AG04450 (cell line): ENCODE measurements at regions of chr14 and their contacts with region 1.

Region 1: DNA sequence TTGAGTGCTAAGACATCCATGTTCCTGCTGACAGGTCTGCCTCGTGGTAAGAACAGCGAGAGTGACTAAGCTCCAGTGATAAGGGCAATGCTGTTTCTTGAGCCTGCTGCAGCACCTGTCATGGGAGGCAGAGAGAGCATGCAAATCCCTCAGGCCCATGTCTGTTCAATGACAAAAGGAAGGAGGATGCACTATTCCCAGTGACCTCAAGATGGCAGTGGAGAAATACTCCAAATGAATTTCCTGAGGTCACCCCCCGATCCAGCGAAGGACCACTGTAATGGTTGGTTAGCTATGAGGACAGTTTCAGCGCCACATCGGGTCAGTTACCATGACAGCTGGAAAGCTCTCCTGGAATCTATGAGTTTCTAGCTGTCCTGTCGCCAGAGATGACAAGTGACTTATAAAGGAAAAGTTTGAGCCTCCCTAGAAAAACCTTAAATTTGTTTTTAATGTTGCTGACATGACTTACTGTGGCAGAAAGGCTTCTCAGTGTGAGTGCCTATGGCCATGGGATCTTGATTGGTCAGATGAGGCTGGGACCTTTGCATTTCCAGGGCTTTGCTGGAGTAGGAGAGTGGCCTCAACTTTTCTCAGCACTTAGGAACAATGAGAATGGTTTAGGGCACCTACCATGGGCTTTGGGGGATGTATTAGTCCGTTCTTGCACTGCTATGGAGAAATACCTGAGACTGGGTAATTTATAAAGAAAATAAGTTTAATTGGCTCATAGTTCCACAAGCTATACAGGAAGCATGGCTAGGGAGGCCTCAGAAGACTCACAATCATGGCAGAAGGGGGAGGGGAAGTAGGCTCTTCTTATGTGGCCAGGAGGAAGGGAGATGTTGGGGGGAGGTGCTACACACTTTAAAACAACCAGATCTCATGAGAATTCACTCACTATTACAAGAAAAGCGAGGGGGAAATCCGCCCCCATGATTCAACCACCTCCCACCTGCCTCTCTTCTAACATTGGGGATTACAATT is 88.0 kb upstream of the TMEM260 start:
- DNase-seq: peak; percentile 16
- H3K4me3 ChIP-seq: no peak overlapping the region; the same call in 1 of the 2 replicates
- H3K27ac ChIP-seq: no peak overlapping the region
- H3K27me3 ChIP-seq: no peaks in the 10 kb centered on the region
- CTCF ChIP-seq: peak; percentile 86

Region 2: GRCh38 chr14:55430024-55430690 is 1061.4 kb before region 1 on chr14:
- CTCF ChIA-PET with region 1: interaction called, 11 read pairs
- POLR2A ChIA-PET with region 1: no interaction called
- DNase-seq: peak; percentile 67
- H3K4me3 ChIP-seq: no peak overlapping the region
- H3K27ac ChIP-seq: no peak overlapping the region
- H3K27me3 ChIP-seq: peaks cover 3% of the 10 kb centered on the region
- CTCF ChIP-seq: peak; percentile 64

Region 3: DNA sequence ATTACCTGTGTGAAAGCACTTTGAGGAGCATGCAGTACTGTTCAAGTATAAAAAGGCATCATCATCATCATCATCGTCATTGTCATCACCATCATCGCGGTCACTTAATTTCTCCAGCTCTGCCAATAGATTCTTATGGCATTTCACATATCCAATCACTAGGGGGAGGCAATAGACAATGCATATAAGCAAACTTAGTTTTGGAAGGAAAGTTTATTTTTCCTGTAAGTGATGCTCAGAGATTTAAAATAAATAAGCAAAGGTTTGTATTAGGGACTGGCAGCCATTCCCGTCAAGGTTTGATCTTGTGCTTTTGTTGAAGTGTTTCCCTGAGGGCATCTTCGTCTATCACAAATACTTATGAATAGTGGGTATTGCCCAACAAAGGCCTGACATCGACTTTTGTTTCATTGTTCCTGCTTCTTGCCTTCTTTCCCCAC is 784.2 kb before region 1 on chr14:
- CTCF ChIA-PET with region 1: interaction called, 18 read pairs
- POLR2A ChIA-PET with region 1: no interaction called
- DNase-seq: no peak
- H3K4me3 ChIP-seq: no peak overlapping the region
- H3K27ac ChIP-seq: no peak overlapping the region
- H3K27me3 ChIP-seq: no peaks in the 10 kb centered on the region
- CTCF ChIP-seq: peak; percentile 79

Region 4: GRCh38 chr14:56676050-56676449 is 184.5 kb after region 1 on chr14:
- CTCF ChIA-PET with region 1: no interaction called
- POLR2A ChIA-PET with region 1: no interaction called
- DNase-seq: no peak
- H3K4me3 ChIP-seq: no peak overlapping the region
- H3K27ac ChIP-seq: no peak overlapping the region
- H3K27me3 ChIP-seq: no peaks in the 10 kb centered on the region
- CTCF ChIP-seq: no peak

Region 5: DNA sequence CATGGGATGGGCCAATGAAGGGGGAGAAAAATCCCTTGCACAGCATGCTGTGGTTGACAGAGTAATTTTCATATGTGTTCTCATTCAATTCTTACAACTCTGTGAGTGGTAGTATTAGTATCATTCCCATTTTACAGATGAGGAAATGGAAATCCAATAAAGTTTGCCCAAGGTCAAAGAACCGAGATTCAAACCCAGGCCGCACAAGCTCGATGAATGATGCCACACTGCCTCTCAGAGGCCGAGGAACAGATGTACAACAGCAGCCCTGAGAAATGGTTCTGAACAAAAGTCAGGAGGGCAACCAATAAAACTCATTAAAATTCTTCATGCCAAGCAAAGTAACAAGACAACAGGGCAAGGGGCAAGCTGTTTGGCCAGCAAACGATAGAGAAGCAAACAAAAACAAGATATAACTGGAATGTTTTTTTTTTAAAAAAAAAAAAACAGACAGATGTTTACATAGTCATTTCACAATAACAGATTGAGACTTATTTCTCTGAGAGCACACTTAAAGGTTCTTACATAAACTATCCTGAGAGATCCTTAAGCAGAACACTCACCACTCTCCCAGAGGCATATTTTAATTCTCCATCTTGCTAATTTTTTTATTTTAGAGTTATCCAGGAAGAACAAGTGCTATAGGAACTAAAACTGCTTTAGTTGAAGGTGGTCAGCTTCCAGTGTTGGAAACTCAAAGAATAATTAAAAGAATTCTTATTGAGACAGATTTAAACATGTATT is 691.3 kb after region 1 on chr14:
- CTCF ChIA-PET with region 1: interaction called, 17 read pairs
- POLR2A ChIA-PET with region 1: no interaction called
- DNase-seq: no peak
- H3K4me3 ChIP-seq: no peak overlapping the region
- H3K27ac ChIP-seq: no peak overlapping the region
- H3K27me3 ChIP-seq: peaks cover 15% of the 10 kb centered on the region
- CTCF ChIP-seq: peak; percentile 31

Region 6: GRCh38 chr14:57317316-57317715 is 825.7 kb after region 1 on chr14:
- CTCF ChIA-PET with region 1: interaction called, 102 read pairs
- POLR2A ChIA-PET with region 1: no interaction called
- DNase-seq: peak; percentile 51
- H3K4me3 ChIP-seq: no peak overlapping the region
- H3K27ac ChIP-seq: no peak overlapping the region
- H3K27me3 ChIP-seq: peaks cover 12% of the 10 kb centered on the region
- CTCF ChIP-seq: peak; percentile 90